ENCODE measurements at regions of chr1 and their contacts with region 1.

Region 1: DNA sequence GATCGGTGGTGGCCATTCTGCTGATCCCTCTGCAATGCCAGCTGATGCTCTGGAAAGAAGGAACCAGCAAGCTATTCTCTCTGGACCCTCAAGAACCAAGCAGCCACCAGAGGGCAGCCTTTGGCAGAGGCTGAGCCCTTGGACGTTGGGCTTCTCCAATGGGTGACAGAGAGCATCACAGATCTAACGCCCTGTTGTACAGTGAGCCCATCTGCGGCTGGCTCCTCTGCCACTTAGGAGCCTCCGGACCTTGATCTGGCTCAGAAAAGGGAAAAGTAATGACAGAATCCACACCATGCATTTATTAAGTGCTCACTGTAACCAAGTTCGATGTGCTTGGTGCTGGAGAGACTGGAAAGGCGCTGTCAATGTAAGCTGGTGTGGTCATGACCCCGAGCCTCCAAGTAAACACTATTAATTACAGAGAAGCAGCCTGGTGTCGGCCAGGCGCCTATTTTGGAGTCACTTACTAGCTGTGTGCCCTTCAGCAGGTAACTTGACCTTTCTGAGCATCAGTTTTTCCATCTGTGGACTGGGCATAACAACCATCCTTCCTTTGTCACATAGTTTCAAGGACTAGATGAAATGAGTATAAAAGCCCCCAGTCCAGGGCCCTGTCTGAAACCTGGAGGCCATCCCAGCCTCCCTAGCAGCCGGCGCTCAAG is 34.9 kb downstream of the ECE1 start:
- DNase-seq: peak; percentile 73 to 92 (median 83)
- ATAC-seq: peak; percentile 82
- H3K4me3 ChIP-seq: no peak overlapping the region
- H3K4me3 Mint-ChIP-seq: no peak overlapping the region
- H3K27ac ChIP-seq: no peak overlapping the region
- H3K27ac Mint-ChIP-seq: peak overlapping the region; percentile 77
- H3K4me1 ChIP-seq: peaks cover 21% of the 10 kb centered on the region
- H3K4me1 Mint-ChIP-seq: peaks cover 29% of the 10 kb centered on the region
- H3K27me3 ChIP-seq: no peaks in the 10 kb centered on the region
- H3K27me3 Mint-ChIP-seq: no peaks in the 10 kb centered on the region
- CTCF ChIP-seq: peak; percentile 63

Region 2: DNA sequence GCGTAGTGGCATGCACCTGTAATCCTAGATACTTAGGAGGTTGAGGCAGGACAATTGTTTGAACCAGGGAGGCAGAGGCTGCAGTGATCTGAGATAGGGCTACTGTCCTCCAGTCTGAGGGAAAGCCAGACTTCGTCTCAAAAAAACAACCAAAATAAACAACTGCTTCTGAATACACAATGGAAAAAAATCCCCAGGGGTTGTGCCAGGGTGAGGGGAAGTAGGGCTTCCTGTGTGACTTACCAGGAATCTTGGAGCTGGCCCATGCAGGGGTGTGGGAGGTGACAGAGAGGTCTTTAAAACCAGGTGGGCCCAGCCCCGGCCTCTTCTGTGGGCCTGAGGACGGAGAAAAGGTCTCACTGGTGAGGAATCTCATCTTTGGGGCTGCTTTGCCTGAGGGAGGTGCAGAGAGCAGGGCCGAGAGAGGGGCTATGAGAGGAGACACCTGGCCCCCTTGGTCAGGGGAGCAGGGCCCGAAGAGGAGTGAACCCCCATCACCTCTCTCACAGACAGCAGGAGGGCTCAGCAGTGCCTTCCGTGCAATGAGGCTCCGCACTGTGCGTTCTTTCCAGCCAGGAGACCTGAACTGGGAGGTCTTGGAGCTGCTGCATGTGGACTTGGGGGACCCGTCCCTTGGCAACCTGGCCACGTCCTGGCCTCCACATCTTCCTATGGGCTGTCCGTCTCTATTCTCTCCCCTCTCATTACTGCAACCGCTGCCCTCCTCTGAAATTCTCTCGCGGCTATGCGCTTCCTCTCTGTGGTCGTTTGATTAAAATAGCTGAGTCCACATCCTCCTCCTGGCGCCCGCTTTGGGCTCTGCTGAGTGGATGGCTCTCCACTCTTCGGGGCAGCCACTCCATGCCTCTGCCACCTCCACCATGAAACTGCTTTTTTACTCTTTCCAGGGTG is 1174.7 kb before region 1 on chr1:
- CTCF ChIA-PET with region 1: no interaction called
- POLR2A ChIA-PET with region 1: no interaction called
- intact Hi-C with region 1: no loop called
- DNase-seq: peak in 2 of 9 experiments; percentile 11 to 19
- ATAC-seq: no peak
- H3K4me3 ChIP-seq: no peak overlapping the region
- H3K4me3 Mint-ChIP-seq: no peak overlapping the region
- H3K27ac ChIP-seq: no peak overlapping the region
- H3K27ac Mint-ChIP-seq: no peak overlapping the region
- H3K4me1 ChIP-seq: peaks cover 7% of the 10 kb centered on the region
- H3K4me1 Mint-ChIP-seq: peaks cover 10% of the 10 kb centered on the region
- H3K27me3 ChIP-seq: peaks cover 0 to 4% of the 10 kb centered on the region in 2 experiments
- H3K27me3 Mint-ChIP-seq: peaks cover 21% of the 10 kb centered on the region
- CTCF ChIP-seq: no peak

Region 3: GRCh38 chr1:20732588-20733360 is 522.6 kb before region 1 on chr1 and contains the start of gene SH2D5:
- CTCF ChIA-PET with region 1: no interaction called
- POLR2A ChIA-PET with region 1: no interaction called
- intact Hi-C with region 1: no loop called
- DNase-seq: peak; percentile 39 to 86 (median 64)
- ATAC-seq: peak; percentile 65
- H3K4me3 ChIP-seq: peak within 1 kb of the TSS; percentile 60 to 67
- H3K4me3 Mint-ChIP-seq: peak within 1 kb of the TSS; percentile 79
- H3K27ac ChIP-seq: peak within 1 kb of the TSS in 1 of 2 experiments; percentile 4
- H3K27ac Mint-ChIP-seq: no peak within 1 kb of the TSS
- H3K4me1 ChIP-seq: peaks cover 21% of the 10 kb centered on the region
- H3K4me1 Mint-ChIP-seq: peaks cover 23% of the 10 kb centered on the region
- H3K27me3 ChIP-seq: peaks cover 0 to 5% of the 10 kb centered on the region in 2 experiments
- H3K27me3 Mint-ChIP-seq: peaks cover 21% of the 10 kb centered on the region
- CTCF ChIP-seq: peak; percentile 62
- total RNA-seq, gene SH2D5: not detected

Region 4: DNA sequence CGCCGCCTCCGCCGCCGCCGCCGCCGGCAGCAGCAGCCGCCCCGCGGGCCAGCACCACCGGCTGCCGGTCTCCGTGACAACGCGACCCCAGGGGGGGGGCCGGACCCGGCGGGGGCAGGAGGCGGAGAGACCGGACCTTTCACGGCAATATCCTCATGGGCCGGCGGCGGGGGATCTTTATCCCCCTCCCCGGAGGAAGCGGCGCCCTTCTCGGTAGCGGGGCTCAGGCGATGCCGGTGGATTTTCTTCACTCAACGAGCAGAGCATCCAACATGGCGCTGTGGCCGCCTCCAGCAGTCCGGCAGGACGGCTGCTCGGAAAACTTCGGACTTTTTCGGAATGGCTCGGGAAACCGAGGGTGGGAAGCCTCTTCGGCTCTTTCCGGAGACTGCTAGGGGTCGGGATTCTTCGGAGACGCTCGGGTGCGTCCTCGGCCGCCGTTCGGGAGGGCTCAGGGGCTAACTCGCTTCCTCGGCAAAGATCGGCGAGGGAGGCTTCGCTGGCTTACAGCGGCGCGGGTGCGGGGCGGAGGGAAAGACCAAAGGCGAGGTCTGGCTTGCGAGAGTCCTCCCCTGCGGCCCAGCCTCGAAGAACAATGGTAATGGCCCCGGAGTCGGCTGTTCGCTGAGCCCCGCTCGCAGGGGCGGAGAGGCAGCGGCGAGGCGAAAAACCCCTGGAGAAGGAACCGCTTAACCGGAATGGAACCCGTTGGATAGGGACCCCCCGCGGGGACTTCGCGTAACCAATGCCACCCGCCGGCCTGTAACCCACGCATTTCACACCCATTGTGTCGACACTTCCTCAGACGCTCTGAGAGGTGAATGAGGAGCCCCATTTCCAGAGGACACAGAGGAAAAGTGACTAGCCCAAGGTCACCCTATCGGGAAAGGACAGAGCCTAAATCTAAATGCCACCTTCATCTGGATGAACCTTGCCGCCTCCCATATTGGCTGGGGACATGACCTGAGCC is 78.5 kb before region 1 on chr1 and contains the start of gene EIF4G3:
- CTCF ChIA-PET with region 1: no interaction called
- POLR2A ChIA-PET with region 1: no interaction called
- intact Hi-C with region 1: no loop called
- DNase-seq: peak; percentile 97 to 100 (median 99)
- ATAC-seq: peak; percentile 95
- H3K4me3 ChIP-seq: peak within 1 kb of the TSS; percentile 77 to 86
- H3K4me3 Mint-ChIP-seq: peak within 1 kb of the TSS; percentile 92
- H3K27ac ChIP-seq: peak within 1 kb of the TSS; percentile 78 to 88
- H3K27ac Mint-ChIP-seq: peak within 1 kb of the TSS; percentile 91
- H3K4me1 ChIP-seq: peaks cover 18% of the 10 kb centered on the region
- H3K4me1 Mint-ChIP-seq: peaks cover 24% of the 10 kb centered on the region
- H3K27me3 ChIP-seq: no peaks in the 10 kb centered on the region
- H3K27me3 Mint-ChIP-seq: no peaks in the 10 kb centered on the region
- CTCF ChIP-seq: no peak
- total RNA-seq, gene EIF4G3: 19.6 to 19.8 TPM

Region 5: GRCh38 chr1:21216835-21217811 is 38.3 kb before region 1 on chr1:
- CTCF ChIA-PET with region 1: interaction called, 10 read pairs
- POLR2A ChIA-PET with region 1: no interaction called
- intact Hi-C with region 1: no loop called
- DNase-seq: peak; percentile 26 to 79 (median 70)
- ATAC-seq: peak; percentile 78
- H3K4me3 ChIP-seq: no peak overlapping the region
- H3K4me3 Mint-ChIP-seq: no peak overlapping the region
- H3K27ac ChIP-seq: no peak overlapping the region
- H3K27ac Mint-ChIP-seq: no peak overlapping the region
- H3K4me1 ChIP-seq: no peaks in the 10 kb centered on the region
- H3K4me1 Mint-ChIP-seq: peaks cover 2% of the 10 kb centered on the region
- H3K27me3 ChIP-seq: no peaks in the 10 kb centered on the region
- H3K27me3 Mint-ChIP-seq: no peaks in the 10 kb centered on the region
- CTCF ChIP-seq: peak; percentile 75

Region 6: DNA sequence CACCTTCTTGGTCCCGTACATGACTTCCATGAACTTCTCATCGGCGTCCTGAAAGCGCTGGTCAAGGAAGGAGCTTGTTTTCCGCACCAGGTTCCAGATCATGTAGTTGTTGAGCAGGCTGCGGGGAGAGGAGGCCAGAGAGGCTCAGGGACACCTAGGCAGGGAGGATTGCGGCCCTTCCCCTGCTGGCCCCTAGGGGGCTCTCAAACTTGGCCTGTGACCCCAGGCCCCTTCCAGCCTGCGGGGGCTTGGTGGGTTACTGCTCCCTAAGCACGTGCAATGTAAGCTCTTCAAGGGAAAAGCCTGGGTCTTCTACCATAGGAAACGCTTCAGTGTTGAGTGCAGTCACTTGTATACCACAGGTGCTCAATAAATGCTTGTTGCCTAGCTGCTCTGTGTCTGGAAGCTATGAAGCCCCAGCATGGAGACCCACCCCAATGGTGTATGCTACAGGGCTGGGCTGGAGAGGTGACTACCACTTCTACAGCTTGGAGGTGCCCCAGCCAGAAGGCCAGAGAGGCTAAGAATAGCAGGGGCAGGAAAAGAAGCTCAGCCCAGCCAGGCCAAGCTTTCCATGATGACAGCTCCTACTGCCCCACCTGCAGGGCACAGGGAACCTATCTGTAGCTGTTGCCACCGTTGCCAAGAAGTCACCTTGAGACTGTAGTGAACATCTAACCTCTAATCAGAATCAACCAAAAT is 10.3 kb before region 1 on chr1:
- CTCF ChIA-PET with region 1: interaction called, 12 read pairs
- POLR2A ChIA-PET with region 1: interaction called, 3 read pairs
- intact Hi-C with region 1: no loop called
- DNase-seq: no peak
- ATAC-seq: no peak
- H3K4me3 ChIP-seq: no peak overlapping the region
- H3K4me3 Mint-ChIP-seq: no peak overlapping the region
- H3K27ac ChIP-seq: no peak overlapping the region
- H3K27ac Mint-ChIP-seq: no peak overlapping the region
- H3K4me1 ChIP-seq: no peaks in the 10 kb centered on the region
- H3K4me1 Mint-ChIP-seq: peaks cover 2% of the 10 kb centered on the region
- H3K27me3 ChIP-seq: no peaks in the 10 kb centered on the region
- H3K27me3 Mint-ChIP-seq: no peaks in the 10 kb centered on the region
- CTCF ChIP-seq: no peak

Region 7: DNA sequence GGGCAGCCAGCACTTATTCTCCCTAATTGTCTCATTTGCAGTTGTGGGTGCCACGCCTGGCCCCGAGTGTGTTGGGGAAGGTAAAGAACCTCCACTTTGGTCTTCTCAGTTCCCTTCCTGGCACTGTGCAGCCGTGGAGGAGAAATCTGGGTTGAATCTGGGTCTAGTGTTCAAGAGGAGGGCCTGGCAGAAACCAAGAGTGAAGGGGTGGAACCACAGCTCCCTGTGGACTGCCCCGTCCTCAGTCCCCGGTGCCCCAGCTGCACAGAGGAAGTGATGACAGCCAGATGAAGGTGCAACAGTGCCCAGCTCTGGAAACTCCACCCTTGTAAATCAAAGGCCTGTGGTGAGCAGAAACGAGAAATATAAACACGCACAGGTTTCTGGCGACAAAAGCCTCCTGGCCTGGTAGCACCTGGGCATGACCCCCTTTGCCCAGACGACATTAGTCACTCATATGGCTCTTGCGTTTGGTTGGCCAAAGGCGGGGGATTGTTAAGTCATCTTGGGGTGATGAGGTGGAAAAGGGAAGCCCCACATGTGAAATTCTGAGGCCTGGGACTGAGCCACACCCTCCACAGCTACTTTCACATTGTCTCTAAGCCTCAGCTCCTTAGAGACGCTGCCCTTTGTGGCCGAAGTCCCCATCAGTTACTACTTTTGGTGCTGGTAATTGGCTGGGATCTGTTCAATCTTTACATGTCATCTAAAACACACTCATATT is 39.0 kb after region 1 on chr1:
- CTCF ChIA-PET with region 1: interaction called, 4 read pairs
- POLR2A ChIA-PET with region 1: interaction called, 4 read pairs
- intact Hi-C with region 1: loop called in 1 of 2 experiments (anchors 1 kb)
- DNase-seq: peak; percentile 71 to 97 (median 85)
- ATAC-seq: peak; percentile 72
- H3K4me3 ChIP-seq: peak overlapping the region; percentile 44 to 86
- H3K4me3 Mint-ChIP-seq: peak overlapping the region; percentile 86
- H3K27ac ChIP-seq: peak overlapping the region; percentile 91 to 94
- H3K27ac Mint-ChIP-seq: peak overlapping the region; percentile 98
- H3K4me1 ChIP-seq: peaks cover 80% of the 10 kb centered on the region
- H3K4me1 Mint-ChIP-seq: peaks cover 82% of the 10 kb centered on the region
- H3K27me3 ChIP-seq: no peaks in the 10 kb centered on the region
- H3K27me3 Mint-ChIP-seq: no peaks in the 10 kb centered on the region
- CTCF ChIP-seq: no peak

Region 8: GRCh38 chr1:21344750-21345443 is 89.5 kb after region 1 on chr1:
- CTCF ChIA-PET with region 1: interaction called, 10 read pairs
- POLR2A ChIA-PET with region 1: interaction called, 9 read pairs
- intact Hi-C with region 1: no loop called
- DNase-seq: peak in 3 of 9 experiments; percentile 25 to 54 (median 30)
- ATAC-seq: peak; percentile 28
- H3K4me3 ChIP-seq: peak overlapping the region; percentile 75 to 94
- H3K4me3 Mint-ChIP-seq: peak overlapping the region; percentile 86
- H3K27ac ChIP-seq: peak overlapping the region in 1 of 2 experiments; percentile 55
- H3K27ac Mint-ChIP-seq: peak overlapping the region; percentile 76
- H3K4me1 ChIP-seq: peaks cover 53% of the 10 kb centered on the region
- H3K4me1 Mint-ChIP-seq: peaks cover 40% of the 10 kb centered on the region
- H3K27me3 ChIP-seq: peaks cover 0 to 8% of the 10 kb centered on the region in 2 experiments
- H3K27me3 Mint-ChIP-seq: no peaks in the 10 kb centered on the region
- CTCF ChIP-seq: no peak

Region 9: DNA sequence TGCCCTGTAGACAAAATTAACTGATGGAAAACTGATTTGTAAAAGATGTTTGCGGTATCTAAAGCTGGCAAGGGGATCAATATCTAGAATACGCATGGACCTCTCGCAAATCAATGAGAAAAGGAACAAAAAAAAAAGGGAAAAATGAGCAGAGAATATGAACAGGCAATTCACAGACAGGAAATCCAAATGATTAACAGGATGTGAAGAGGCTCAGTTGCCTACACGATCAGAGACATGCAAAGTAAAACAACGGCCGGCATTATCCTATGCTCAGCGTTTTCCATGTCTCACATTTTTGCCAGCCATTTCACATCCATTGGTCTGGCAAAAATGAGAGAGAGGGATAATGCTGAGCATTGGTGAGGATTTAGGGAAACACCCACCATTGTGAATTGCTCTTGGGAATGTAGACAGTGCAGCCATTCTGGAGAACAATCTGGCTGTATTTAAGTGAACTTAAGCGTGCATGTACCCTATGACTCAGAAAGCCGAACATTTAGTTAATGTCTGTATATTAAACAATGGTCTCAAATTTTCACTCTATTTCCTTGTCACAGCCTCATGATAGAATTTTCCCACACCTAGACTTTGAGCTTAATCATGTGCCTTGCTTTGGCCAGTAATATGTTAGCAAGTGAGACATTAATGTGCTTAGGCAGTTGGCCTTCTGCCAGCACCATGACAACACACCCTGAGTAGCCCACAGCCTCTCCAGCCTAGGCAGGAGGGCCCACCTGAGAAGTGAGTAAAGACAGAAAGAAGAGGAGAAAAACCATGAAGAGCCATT is 123.5 kb after region 1 on chr1:
- CTCF ChIA-PET with region 1: interaction called, 455 read pairs
- POLR2A ChIA-PET with region 1: no interaction called
- intact Hi-C with region 1: no loop called
- DNase-seq: no peak
- ATAC-seq: no peak
- H3K4me3 ChIP-seq: no peak overlapping the region
- H3K4me3 Mint-ChIP-seq: no peak overlapping the region
- H3K27ac ChIP-seq: no peak overlapping the region
- H3K27ac Mint-ChIP-seq: no peak overlapping the region
- H3K4me1 ChIP-seq: no peaks in the 10 kb centered on the region
- H3K4me1 Mint-ChIP-seq: no peaks in the 10 kb centered on the region
- H3K27me3 ChIP-seq: no peaks in the 10 kb centered on the region
- H3K27me3 Mint-ChIP-seq: peaks cover 8% of the 10 kb centered on the region
- CTCF ChIP-seq: no peak